ENCODE measurements at regions of chr18 and their contacts with region 1.

Region 1: GRCh38 chr18:43442571-43442970 is 165.3 kb upstream of the SYT4 start:
- DNase-seq: no peak
- ATAC-seq: no peak
- H3K4me3 ChIP-seq: no peak overlapping the region
- H3K27ac ChIP-seq: no peak overlapping the region
- H3K4me1 ChIP-seq: no peaks in the 10 kb centered on the region
- H3K27me3 ChIP-seq: no peaks in the 10 kb centered on the region
- CTCF ChIP-seq: no peak
- POLR2A ChIP-seq: no peak

Region 2: GRCh38 chr18:43350176-43350575 is 92.4 kb before region 1 on chr18:
- in situ Hi-C with region 1: no loop called
- intact Hi-C with region 1: no loop called
- DNase-seq: no peak
- ATAC-seq: no peak
- H3K4me3 ChIP-seq: no peak overlapping the region
- H3K27ac ChIP-seq: no peak overlapping the region
- H3K4me1 ChIP-seq: no peaks in the 10 kb centered on the region
- H3K27me3 ChIP-seq: no peaks in the 10 kb centered on the region
- CTCF ChIP-seq: no peak
- POLR2A ChIP-seq: no peak

Region 3: GRCh38 chr18:43525169-43525568 is 82.6 kb after region 1 on chr18:
- in situ Hi-C with region 1: loop called in 1 of 4 experiments (anchors 25 kb)
- intact Hi-C with region 1: no loop called
- DNase-seq: no peak
- ATAC-seq: no peak
- H3K4me3 ChIP-seq: no peak overlapping the region
- H3K27ac ChIP-seq: no peak overlapping the region
- H3K4me1 ChIP-seq: no peaks in the 10 kb centered on the region
- H3K27me3 ChIP-seq: no peaks in the 10 kb centered on the region
- CTCF ChIP-seq: no peak
- POLR2A ChIP-seq: no peak

Measured in gastrocnemius medialis (tissue), 4 donors.